Activated CD4-positive, alpha-beta memory T cell treated with anti-CD3 and anti-CD28 coated beads, Interleukin-2, amount 10 ng/mL, durations not matched to agents 7 days and 5 days (primary cell): ENCODE measurements at regions of chr5 and their contacts with region 1.

Region 1: GRCh38 chr5:69093771-69094482 is at the start of gene SLC30A5:
- DNase-seq: peak; percentile 99
- H3K4me3 Mint-ChIP-seq: peak within 1 kb of the TSS; percentile 95
- H3K27ac Mint-ChIP-seq: peak within 1 kb of the TSS; percentile 90
- H3K4me1 Mint-ChIP-seq: peaks cover 37% of the 10 kb centered on the region
- H3K27me3 Mint-ChIP-seq: no peaks in the 10 kb centered on the region
- total RNA-seq, gene SLC30A5: 34.2 to 43.1 TPM

Region 2: GRCh38 chr5:69042915-69043658 is 50.8 kb before region 1 on chr5:
- CTCF ChIA-PET with region 1: interaction called, 12 read pairs
- POLR2A ChIA-PET with region 1: interaction called, 7 read pairs
- DNase-seq: peak; percentile 81
- H3K4me3 Mint-ChIP-seq: peak overlapping the region; percentile 74
- H3K27ac Mint-ChIP-seq: peak overlapping the region; percentile 74
- H3K4me1 Mint-ChIP-seq: peaks cover 17% of the 10 kb centered on the region
- H3K27me3 Mint-ChIP-seq: no peaks in the 10 kb centered on the region

Region 3: DNA sequence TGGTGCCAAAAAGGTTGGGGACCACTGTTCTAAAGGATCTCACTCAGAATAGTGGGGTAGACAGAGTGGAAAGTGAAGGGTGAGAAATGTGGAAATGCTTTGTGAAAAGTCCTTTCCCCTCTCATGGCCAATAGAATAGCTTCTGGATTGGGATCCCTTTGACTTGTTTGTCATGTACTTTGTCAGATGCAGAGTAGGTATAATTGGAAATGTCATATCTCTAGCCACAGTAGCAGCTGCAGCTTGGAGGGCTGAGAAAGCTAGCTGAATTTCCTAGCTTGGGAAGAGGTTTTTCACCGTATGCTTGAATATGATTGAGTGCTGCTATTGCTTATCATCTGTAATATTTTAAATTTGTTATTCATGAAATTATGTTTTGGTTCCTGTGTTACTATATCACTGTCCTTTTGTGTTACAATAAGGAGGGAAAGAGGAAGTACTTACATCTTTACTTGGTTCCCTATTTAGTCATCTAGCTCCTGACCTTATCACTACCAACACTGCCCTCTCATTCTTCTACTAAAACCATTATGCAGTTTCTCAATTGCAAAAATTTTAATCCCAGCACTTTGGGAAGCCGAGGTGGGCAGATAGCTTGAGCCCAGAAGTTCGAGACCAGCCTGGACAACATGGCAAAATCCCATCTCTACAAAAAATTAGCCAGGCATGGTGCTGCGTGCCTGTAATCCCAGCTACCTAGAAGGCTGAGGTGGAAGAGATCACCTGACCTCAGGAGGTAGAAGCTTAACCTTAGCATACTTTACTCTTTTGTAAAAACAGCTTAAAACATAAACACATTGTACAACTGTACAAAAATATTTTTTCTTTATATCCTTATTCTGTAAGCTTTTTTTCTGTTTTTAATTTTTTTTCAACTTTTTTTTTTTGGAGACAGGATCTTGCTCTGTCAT is 12.3 kb after region 1 on chr5:
- CTCF ChIA-PET with region 1: interaction called, 16 read pairs
- POLR2A ChIA-PET with region 1: interaction called, 6 read pairs
- DNase-seq: no peak
- H3K4me3 Mint-ChIP-seq: no peak overlapping the region
- H3K27ac Mint-ChIP-seq: no peak overlapping the region
- H3K4me1 Mint-ChIP-seq: peaks cover 5% of the 10 kb centered on the region
- H3K27me3 Mint-ChIP-seq: no peaks in the 10 kb centered on the region

Region 4: GRCh38 chr5:69166686-69167492 is 73.0 kb after region 1 on chr5 and contains the start of gene CCNB1:
- CTCF ChIA-PET with region 1: interaction called, 20 read pairs
- POLR2A ChIA-PET with region 1: interaction called, 19 read pairs
- DNase-seq: peak; percentile 99
- H3K4me3 Mint-ChIP-seq: peak within 1 kb of the TSS; percentile 94
- H3K27ac Mint-ChIP-seq: peak within 1 kb of the TSS; percentile 85
- H3K4me1 Mint-ChIP-seq: peaks cover 50% of the 10 kb centered on the region
- H3K27me3 Mint-ChIP-seq: no peaks in the 10 kb centered on the region
- total RNA-seq, gene CCNB1: 162 to 175 TPM

Region 5: GRCh38 chr5:69234457-69235268 is 140.7 kb after region 1 on chr5 and contains the start of gene CDK7:
- CTCF ChIA-PET with region 1: interaction called, 23 read pairs
- POLR2A ChIA-PET with region 1: interaction called, 5 read pairs
- DNase-seq: peak; percentile 95
- H3K4me3 Mint-ChIP-seq: peak within 1 kb of the TSS; percentile 98
- H3K27ac Mint-ChIP-seq: peak within 1 kb of the TSS; percentile 77
- H3K4me1 Mint-ChIP-seq: peaks cover 39% of the 10 kb centered on the region
- H3K27me3 Mint-ChIP-seq: no peaks in the 10 kb centered on the region
- total RNA-seq, gene CDK7: 26.0 to 30.5 TPM

Region 6: DNA sequence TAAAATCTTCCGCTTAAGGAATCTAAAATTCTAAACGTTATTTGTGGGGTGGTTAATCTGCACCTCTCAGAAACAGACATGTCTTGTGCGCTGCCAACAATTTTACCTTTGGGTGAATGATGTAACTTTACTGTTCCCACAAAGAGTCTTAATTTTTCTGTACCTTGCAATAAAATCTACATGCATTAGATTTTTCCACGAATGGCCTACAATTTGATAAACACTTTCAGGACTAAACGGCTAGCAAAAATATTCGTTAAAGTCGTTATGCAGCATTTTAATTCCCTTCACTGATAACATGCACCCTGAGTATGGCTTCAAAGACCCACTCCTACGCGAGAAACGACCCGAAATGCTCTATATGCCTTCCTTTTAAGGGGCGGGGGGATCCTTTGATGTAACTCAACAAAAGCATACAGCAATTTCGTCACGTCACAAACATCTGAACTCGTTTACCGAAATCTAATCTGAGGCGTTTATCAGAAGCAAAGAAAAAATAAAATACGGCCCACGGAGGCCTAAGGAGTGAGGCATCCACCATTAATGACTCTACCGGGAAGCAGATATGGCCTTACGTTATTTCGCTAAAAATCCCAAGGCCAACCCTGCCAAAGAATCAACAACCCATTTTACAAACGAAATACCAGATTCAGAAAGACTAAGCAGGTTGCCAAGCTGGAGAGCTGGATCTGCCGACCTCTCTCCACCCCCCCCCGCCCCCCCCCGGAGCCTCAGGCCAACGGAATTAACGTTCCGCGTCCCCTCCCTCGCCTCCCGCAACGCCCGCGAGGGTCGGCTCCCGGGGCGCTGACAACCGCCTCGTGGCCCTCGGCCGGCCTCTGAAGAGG is 274.8 kb after region 1 on chr5:
- CTCF ChIA-PET with region 1: interaction called, 12 read pairs
- POLR2A ChIA-PET with region 1: interaction called, 10 read pairs
- DNase-seq: no peak
- H3K4me3 Mint-ChIP-seq: peak overlapping the region; percentile 97
- H3K27ac Mint-ChIP-seq: peak overlapping the region; percentile 95
- H3K4me1 Mint-ChIP-seq: peaks cover 44% of the 10 kb centered on the region
- H3K27me3 Mint-ChIP-seq: no peaks in the 10 kb centered on the region